Activated CD4-positive, alpha-beta memory T cell treated with anti-CD3 and anti-CD28 coated beads for 36 hours (primary cell): ENCODE measurements at regions of chr14 and their contacts with region 1.

Region 1: DNA sequence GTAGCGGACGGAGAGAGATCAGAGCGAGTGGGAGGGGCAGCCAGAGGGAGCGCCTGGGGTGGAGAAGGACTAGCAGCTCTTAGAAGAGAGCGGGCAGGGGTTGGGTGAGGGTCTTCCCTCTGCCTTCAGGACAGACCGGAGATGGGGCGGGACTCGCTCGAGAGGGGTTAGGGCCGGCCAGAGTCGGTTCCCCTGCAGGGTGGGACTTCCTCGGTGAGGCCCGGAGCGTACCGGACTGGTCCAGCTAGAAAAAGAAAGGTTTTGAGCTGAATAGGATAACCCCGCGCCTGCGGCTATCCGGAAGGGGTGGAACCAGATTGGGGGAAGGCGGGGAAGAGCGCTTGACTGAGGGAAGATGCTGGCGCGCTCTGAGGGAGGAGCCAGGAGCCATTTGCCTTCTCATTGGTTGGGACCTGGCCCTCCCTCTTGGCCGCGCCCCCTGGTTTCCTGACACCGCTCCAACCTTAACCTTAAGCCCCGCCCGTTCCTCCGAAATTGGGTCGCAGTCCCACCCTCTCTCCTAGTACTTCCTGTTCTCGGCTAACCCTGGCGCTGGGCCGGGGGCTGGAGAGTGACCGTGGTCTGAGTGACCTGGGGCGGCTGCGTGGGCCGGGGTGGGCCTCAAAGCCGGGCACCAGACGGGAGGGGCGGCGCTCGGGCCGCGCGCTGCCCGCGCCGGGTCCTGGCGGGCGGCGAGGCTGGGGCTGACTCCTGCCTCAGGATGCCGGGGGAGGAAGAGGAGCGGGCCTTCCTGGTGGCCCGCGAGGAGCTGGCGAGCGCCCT is at the start of gene RNF31:
- DNase-seq: peak; percentile 99
- H3K4me3 Mint-ChIP-seq: peak within 1 kb of the TSS; percentile 100
- H3K27ac Mint-ChIP-seq: peak within 1 kb of the TSS; percentile 99
- H3K4me1 Mint-ChIP-seq: peaks cover 56% of the 10 kb centered on the region
- H3K27me3 Mint-ChIP-seq: no peaks in the 10 kb centered on the region
- total RNA-seq, gene RNF31: 75.5 to 80.4 TPM

Region 2: DNA sequence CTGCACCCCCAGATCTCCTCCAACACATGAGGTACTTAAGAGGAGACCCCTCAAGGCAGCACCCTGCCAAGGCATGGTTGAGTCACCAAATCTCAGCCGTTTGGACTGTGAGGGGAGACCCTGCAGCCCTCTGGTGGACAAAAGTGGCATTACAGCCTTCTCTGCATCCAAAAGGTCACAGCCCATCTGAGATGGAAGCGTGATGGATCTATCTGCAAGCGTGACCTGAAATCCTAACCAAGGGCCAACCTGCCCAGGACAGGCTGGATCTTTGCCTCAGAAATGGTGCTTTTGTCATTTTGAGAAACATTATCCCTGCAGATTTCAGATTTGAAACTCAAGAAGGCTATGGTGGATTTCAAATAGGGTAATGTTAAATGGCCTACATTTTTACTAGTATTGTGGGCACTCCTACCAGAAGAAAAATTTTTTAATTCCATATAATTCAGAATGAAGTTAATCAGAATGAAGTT is 217.3 kb before region 1 on chr14:
- CTCF ChIA-PET with region 1: no interaction called
- POLR2A ChIA-PET with region 1: no interaction called
- intact Hi-C with region 1: no loop called
- DNase-seq: peak; percentile 88
- H3K4me3 Mint-ChIP-seq: no peak overlapping the region
- H3K27ac Mint-ChIP-seq: no peak overlapping the region
- H3K4me1 Mint-ChIP-seq: no peaks in the 10 kb centered on the region
- H3K27me3 Mint-ChIP-seq: peaks cover 3% of the 10 kb centered on the region

Region 3: GRCh38 chr14:24093901-24094761 is 53.0 kb before region 1 on chr14 and contains the start of gene PCK2:
- CTCF ChIA-PET with region 1: interaction called, 3 read pairs
- POLR2A ChIA-PET with region 1: interaction called, 20 read pairs
- intact Hi-C with region 1: loop called (anchors 1 kb)
- DNase-seq: peak; percentile 94
- H3K4me3 Mint-ChIP-seq: peak within 1 kb of the TSS; percentile 94
- H3K27ac Mint-ChIP-seq: peak within 1 kb of the TSS; percentile 97
- H3K4me1 Mint-ChIP-seq: peaks cover 28% of the 10 kb centered on the region
- H3K27me3 Mint-ChIP-seq: no peaks in the 10 kb centered on the region
- total RNA-seq, gene PCK2: 118 to 125 TPM

Region 4: GRCh38 chr14:24135834-24136542 is 11.2 kb before region 1 on chr14 and contains the start of gene PSME1:
- CTCF ChIA-PET with region 1: interaction called, 23 read pairs
- POLR2A ChIA-PET with region 1: interaction called, 53 read pairs
- intact Hi-C with region 1: loop called (anchors 1 kb)
- DNase-seq: peak; percentile 97
- H3K4me3 Mint-ChIP-seq: peak within 1 kb of the TSS; percentile 95
- H3K27ac Mint-ChIP-seq: peak within 1 kb of the TSS; percentile 96
- H3K4me1 Mint-ChIP-seq: peaks cover 54% of the 10 kb centered on the region
- H3K27me3 Mint-ChIP-seq: no peaks in the 10 kb centered on the region
- total RNA-seq, gene PSME1: 403 to 427 TPM

Region 5: DNA sequence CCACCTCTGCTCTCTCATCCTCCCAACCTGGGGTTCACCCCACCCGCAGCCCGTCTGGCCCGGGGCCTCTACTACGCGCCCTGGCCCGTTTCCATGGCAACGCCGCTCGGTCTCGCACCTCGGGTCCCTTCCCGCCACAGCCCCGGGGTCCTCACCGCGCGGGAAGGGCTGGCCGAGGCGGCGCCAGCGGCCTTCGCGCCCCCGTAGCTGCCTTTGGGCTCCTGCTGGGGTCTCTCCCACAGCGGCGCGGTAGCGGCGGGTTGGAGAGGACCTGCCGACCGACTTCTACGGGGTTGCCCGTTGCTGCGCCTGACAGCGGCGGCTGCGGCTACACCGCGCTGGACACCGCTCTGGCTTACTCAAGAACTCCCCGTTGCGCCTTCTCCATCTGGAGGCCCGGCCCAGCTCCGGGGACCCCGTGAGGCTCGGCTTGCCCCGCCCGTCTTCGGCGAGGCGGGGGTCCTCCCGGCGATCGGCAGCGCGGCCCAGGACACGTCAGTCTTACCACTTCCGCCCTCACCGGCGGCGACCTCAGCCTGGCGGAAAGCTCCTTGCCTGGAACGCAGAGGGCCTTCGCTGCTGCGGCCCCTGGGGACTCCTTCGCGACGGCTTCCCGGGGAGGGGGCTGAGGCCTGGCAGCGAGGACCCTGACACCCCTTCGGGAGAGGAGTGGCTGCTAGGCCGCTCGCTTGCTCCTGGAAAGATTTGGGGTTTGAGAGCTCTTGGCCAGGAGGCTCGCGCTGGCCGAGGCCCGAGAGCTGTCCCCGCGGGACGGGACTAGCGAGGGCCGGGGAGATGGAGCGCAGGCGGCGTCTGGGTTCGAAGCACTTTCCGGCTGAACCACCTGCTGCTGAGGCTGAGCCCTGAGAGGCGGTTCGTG is 48.3 kb after region 1 on chr14 and contains the start of gene TM9SF1:
- CTCF ChIA-PET with region 1: interaction called, 5 read pairs
- POLR2A ChIA-PET with region 1: interaction called, 18 read pairs
- intact Hi-C with region 1: no loop called
- DNase-seq: peak; percentile 91
- H3K4me3 Mint-ChIP-seq: peak within 1 kb of the TSS; percentile 96
- H3K27ac Mint-ChIP-seq: peak within 1 kb of the TSS; percentile 95
- H3K4me1 Mint-ChIP-seq: peaks cover 55% of the 10 kb centered on the region
- H3K27me3 Mint-ChIP-seq: no peaks in the 10 kb centered on the region
- total RNA-seq, gene TM9SF1: 23.7 to 26.7 TPM

Region 6: GRCh38 chr14:24431569-24432258 is 284.5 kb after region 1 on chr14:
- CTCF ChIA-PET with region 1: no interaction called
- POLR2A ChIA-PET with region 1: interaction called, 5 read pairs
- intact Hi-C with region 1: loop called (anchors 2 kb)
- DNase-seq: peak; percentile 94
- H3K4me3 Mint-ChIP-seq: peak overlapping the region; percentile 91
- H3K27ac Mint-ChIP-seq: peak overlapping the region; percentile 98
- H3K4me1 Mint-ChIP-seq: peaks cover 41% of the 10 kb centered on the region
- H3K27me3 Mint-ChIP-seq: no peaks in the 10 kb centered on the region